ENCODE measurements at regions of chr15 and their contacts with region 1.

Region 1: GRCh38 chr15:48877630-48878595 is at the start of gene EID1:
- DNase-seq: peak; percentile 77 to 97
- H3K4me3 ChIP-seq: peak within 1 kb of the TSS; percentile 77 to 81
- H3K27ac ChIP-seq: peak within 1 kb of the TSS; percentile 77 to 82
- H3K4me1 ChIP-seq: peaks cover 5 to 8% of the 10 kb centered on the region in 2 donors
- H3K27me3 ChIP-seq: no peaks in the 10 kb centered on the region
- CTCF ChIP-seq: peak in 1 of 3 experiments; percentile 4
- total RNA-seq, gene EID1: 247 TPM

Region 2: DNA sequence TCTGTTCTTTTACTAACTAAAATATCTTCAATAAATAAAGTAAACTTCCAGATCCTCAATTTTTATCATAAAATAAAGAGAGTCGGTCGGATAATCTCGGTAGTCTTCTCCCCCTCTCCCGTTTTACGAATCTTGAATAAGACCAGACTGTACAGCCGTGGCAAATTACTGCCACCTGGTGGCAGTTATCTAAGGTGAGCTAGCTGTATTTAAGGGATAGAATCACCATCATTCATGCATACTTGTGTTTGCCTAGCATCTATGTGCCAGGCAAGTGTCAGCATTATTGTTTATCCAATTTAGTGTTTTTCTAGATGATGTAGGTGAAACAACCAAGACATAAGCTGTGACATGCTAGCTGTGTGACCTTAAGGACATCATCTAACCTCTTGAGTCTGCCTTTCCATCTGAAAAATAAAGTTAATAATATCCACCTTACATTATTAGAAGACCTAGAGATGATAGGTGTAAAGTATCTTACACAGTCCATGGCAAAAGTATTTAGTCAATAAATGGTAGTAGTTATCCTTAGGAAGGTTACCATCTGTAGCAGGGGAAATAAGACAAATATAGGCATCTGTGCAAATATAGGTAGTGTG is 525.3 kb before region 1 on chr15:
- intact Hi-C with region 1: no loop called
- DNase-seq: peak in 1 of 2 donors; percentile 79
- H3K4me3 ChIP-seq: no peak overlapping the region
- H3K27ac ChIP-seq: no peak overlapping the region
- H3K4me1 ChIP-seq: peaks cover 0 to 11% of the 10 kb centered on the region in 2 donors
- H3K27me3 ChIP-seq: no peaks in the 10 kb centered on the region
- CTCF ChIP-seq: peak; percentile 41 to 81 (median 73)

Region 3: DNA sequence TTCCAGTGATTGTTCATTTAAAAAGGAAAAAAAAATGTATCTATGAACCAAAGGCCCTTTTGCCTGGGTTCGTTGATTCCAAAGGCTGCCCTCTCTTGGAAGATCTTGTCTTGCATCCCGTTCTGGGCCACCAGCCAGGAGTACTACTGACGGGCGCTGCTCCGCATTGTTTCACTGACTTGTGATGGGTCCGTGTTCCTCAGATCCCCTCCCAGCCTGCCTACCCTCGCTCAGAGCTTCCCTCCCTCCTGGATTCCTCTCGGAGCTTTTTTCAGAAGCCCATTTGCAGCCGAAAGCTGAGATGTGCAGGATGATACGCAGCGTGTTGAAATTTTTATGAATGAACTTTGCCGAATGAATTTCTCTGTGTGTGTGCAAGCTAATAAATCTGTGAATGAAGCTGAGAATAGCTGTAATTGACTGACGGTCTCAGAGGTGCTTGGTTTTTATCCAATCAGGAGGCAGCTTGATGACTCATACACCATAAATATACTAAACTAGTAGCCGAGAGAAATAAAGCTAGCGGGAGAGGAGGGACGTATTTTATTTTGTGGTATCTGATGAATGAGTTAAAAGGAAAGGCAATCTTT is 85.7 kb after region 1 on chr15 and contains the start of gene SHC4:
- intact Hi-C with region 1: loop called (anchors 5 kb)
- DNase-seq: peak in 1 of 2 donors; percentile 77
- H3K4me3 ChIP-seq: peak within 1 kb of the TSS; percentile 73
- H3K27ac ChIP-seq: peak within 1 kb of the TSS; percentile 57 to 71
- H3K4me1 ChIP-seq: peaks cover 4 to 20% of the 10 kb centered on the region in 2 donors
- H3K27me3 ChIP-seq: no peaks in the 10 kb centered on the region
- CTCF ChIP-seq: peak in 1 of 3 experiments; percentile 10
- total RNA-seq, gene SHC4: 7.2 TPM

Region 4: GRCh38 chr15:48975472-48976419 is 97.8 kb after region 1 on chr15:
- intact Hi-C with region 1: loop called (anchors 1 kb)
- DNase-seq: peak in 1 of 2 donors; percentile 87
- H3K4me3 ChIP-seq: peak overlapping the region; percentile 57 to 68
- H3K27ac ChIP-seq: peak overlapping the region; percentile 87 to 88
- H3K4me1 ChIP-seq: peaks cover 4% of the 10 kb centered on the region in 2 donors
- H3K27me3 ChIP-seq: no peaks in the 10 kb centered on the region
- CTCF ChIP-seq: peak; percentile 72 to 96 (median 91)